ENCODE measurements at regions of chr7 and their contacts with region 1.

Region 1: DNA sequence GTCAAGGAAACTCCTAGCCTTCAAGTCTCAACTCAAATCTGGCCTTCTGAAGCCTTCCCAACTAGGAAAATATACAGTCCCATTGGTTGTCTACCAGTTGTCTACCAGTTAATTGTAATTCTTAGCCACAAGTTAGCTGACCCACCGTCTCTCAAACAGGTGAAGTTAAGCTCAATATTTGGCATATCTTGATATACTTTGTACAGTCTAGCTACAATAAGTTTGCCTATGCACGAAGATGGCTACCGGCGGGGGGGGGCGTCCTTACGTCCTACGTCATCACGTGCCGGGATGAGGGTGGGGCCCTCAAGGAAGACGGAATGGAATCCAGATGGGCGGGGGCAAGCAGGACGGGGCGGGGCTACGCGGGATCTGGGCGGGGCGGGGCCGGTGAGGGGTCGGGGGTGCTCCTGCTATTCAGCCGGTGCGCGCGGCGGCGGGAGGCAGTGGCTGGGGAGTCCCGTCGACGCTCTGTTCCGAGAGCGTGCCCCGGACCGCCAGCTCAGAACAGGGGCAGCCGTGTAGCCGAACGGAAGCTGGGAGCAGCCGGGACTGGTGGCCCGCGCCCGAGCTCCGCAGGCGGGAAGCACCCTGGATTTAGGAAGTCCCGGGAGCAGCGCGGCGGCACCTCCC is at the start of gene AHR:
- DNase-seq: peak; percentile 98
- H3K4me3 ChIP-seq: peak within 1 kb of the TSS; percentile 93 to 99 (median 95)
- H3K27ac ChIP-seq: peak within 1 kb of the TSS; percentile 91 to 97 (median 93)
- H3K4me1 ChIP-seq: peaks cover 0 to 24% (median 9%) of the 10 kb centered on the region in 4 donors
- H3K27me3 ChIP-seq: no peaks in the 10 kb centered on the region
- CTCF ChIP-seq: no peak
- EP300 ChIP-seq: no peak
- POLR2A ChIP-seq: peak; percentile 80 to 83
- total RNA-seq, gene AHR: 41.8 to 76.0 (median 49.8) TPM

Region 2: DNA sequence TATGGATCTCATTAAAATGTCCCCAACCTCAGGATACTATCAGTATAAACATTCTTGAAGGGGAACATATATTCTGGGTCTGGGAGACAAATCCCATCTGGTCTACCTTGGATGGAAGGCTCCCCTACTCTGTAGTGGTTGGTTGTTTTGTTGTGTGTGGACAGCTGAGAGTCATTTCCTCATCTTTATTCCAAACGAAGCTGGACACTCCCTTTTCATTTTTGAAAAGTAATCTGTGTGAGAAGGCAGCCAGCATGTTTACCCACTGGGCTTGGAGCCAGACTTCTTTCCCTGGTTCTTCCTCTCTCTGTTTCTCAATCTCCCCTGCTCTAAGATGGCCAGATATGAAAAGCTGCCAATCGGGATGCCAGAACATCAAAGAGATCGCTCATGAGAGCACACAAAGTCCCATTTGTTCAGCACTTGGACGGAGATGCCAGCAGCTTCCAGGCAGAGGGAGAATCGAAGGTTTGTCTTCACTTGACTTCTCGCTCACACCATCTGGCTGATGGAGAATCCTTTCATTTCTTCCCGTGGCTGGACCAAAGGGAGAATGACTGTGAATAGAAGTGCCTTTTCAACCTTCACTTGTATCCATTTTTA is 308.4 kb before region 1 on chr7:
- intact Hi-C with region 1: loop called (anchors 5 kb)
- DNase-seq: peak; percentile 82
- H3K4me3 ChIP-seq: no peak overlapping the region
- H3K27ac ChIP-seq: peak overlapping the region in 3 of 4 donors; percentile 8 to 54 (median 39)
- H3K4me1 ChIP-seq: peaks cover 0 to 12% (median 4%) of the 10 kb centered on the region in 4 donors
- H3K27me3 ChIP-seq: no peaks in the 10 kb centered on the region
- CTCF ChIP-seq: no peak
- EP300 ChIP-seq: no peak
- POLR2A ChIP-seq: no peak

Region 3: DNA sequence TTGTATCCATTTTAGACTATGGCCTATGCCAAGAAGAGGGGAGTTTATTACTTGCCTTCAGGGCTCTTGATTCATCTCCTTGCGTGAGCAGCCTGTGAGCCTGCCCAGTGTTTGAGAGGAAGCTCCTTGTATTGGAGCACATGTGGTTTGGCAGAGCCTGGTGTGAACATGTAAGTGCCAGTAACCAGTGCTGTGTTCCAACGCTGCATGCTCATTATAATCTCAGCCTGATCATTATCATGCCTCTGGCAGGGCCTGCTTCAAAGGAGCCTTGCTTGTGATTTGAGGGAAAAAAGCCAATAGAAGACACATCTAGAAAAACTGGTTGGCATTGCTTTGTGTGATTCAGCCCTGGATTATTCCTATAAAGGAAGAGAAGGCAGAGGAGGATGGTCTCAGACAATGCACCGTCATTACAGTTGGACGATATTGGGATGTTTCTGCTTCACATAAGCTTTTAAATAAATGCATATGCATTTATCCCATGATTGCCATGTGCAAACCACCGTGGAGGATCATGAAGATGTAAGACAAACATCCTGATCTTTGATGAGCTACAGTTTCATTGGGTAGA is 203.2 kb before region 1 on chr7:
- intact Hi-C with region 1: loop called (anchors 10 kb)
- DNase-seq: no peak
- H3K4me3 ChIP-seq: no peak overlapping the region
- H3K27ac ChIP-seq: no peak overlapping the region
- H3K4me1 ChIP-seq: peaks cover 0 to 13% (median 0%) of the 10 kb centered on the region in 4 donors
- H3K27me3 ChIP-seq: no peaks in the 10 kb centered on the region
- CTCF ChIP-seq: no peak
- EP300 ChIP-seq: no peak
- POLR2A ChIP-seq: no peak